ENCODE measurements at regions of chr12 and their contacts with region 1.

Region 1: DNA sequence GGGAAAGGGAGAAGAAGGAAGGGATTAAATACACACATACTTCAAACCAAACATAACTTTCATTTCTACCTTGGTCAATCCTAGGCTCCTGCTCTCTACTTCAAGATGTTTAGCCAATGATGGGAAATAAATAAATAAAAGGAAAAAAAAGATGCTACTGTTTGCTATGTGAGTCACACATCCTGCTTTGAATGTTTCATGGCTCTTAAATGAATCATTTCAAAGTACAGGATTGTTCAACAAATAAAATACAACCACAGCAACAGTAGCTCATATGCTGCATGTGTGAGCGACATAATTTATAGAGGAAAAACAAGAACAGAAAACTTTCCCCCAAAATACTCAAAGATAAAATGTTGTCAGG is 54.3 kb upstream of the NPFF start:
- DNase-seq: no peak
- H3K4me3 ChIP-seq: no peak overlapping the region
- H3K27ac ChIP-seq: no peak overlapping the region
- H3K4me1 ChIP-seq: peaks cover 5% of the 10 kb centered on the region
- H3K27me3 ChIP-seq: no peaks in the 10 kb centered on the region
- CTCF ChIP-seq: no peak
- EP300 ChIP-seq: no peak
- POLR2A ChIP-seq: no peak

Region 2: DNA sequence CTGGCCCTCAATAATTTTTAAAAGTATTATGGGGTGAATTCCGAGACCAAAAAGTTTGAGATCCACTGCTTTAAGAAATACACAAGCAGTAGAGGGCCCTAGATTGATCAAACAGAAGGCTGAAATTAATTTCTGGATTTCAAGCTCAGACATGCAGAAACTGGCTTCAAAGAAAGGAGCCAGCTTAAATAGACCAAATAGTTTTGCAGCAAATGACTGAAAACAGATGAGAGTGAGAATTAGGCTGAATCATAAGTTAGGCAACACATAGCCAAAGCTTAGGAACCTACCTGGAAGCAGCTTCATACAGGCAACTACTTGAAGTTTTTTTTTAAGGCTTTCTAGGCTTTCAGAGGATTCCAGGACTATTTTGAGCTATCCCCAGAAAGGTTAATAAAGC is 52.2 kb after region 1 on chr12:
- intact Hi-C with region 1: loop called in 1 of 4 experiments (anchors 5 kb)
- DNase-seq: no peak
- H3K4me3 ChIP-seq: no peak overlapping the region
- H3K27ac ChIP-seq: no peak overlapping the region
- H3K4me1 ChIP-seq: peaks cover 13% of the 10 kb centered on the region
- H3K27me3 ChIP-seq: no peaks in the 10 kb centered on the region
- CTCF ChIP-seq: no peak
- EP300 ChIP-seq: no peak
- POLR2A ChIP-seq: no peak

Measured in ovary (tissue), 10 donors.